ENCODE measurements at regions of chr4 and their contacts with region 1.

Region 1: DNA sequence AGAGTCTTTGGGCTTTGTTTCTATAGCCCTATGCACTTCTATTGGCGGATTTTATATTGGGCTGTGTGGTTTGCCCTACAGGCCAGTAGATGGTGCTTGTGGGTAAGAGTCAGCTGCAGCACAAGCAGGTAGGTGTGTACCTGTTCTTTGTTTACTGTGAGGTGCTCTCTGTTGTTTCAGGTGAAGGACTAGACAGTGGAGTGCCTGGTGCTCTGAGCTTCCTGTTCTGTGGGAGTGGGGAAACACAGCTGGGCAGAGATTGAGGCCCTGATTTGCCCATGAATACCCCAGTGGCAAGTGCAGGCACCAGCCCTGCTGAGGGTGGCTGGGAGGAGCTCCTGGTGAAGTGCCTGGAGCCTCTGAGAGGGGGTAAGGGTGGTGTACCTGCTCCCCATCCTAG is 26.3 kb upstream of the UCP1 start:
- DNase-seq: peak; percentile 59 to 69
- H3K4me3 ChIP-seq: no peak overlapping the region
- H3K4me3 Mint-ChIP-seq: no peak overlapping the region
- H3K27ac Mint-ChIP-seq: no peak overlapping the region
- H3K4me1 ChIP-seq: no peaks in the 10 kb centered on the region
- H3K4me1 Mint-ChIP-seq: no peaks in the 10 kb centered on the region
- H3K27me3 ChIP-seq: no peaks in the 10 kb centered on the region
- H3K27me3 Mint-ChIP-seq: peaks cover 21% of the 10 kb centered on the region
- CTCF ChIP-seq: peak; percentile 52 to 77

Region 2: DNA sequence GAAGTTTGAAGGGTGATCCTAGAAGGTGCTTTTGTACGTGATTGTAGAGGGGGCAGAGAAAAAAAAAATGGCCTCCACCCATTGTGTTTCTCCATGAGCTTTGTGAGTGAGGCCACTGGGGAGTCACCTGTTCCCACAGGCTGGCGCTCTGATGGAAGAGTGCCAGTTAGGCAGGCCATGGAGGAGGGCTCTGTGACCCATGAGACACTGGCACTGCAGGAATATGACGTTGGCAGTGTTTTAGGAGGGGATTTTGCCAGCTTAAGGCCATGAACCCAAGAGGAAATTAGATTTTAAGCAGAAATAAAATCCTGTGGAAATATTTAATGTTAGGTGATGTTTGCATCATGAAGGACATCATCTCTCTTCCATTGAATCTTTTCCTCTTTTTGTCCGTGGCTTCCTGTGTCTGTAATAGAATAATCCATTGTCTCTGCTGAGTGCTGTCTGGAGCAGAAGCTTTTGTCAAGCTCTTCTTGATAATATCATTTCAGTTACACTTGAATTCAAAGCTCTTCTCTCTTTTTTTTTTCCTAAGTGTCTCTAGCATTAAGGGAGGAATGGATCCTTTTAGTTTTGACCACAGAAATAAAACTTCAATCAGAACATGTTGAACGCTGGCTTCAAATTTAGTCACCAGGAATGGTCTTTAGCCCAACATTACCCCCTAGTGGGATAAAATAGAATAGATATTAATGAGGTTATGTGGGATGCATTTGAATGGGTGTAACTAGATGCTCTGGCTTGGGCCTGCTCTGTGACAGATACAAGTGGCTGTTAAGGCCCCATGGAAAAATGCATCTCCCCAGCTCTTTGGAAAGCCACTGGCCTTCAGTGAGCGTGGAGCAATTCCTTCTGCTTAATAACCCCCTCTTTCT is 14.7 kb after region 1 on chr4:
- CTCF ChIA-PET with region 1: interaction called, 11 read pairs
- POLR2A ChIA-PET with region 1: interaction called, 8 read pairs
- intact Hi-C with region 1: loop called (anchors 1 kb)
- DNase-seq: peak in 1 of 2 experiments; percentile 47
- H3K4me3 ChIP-seq: no peak overlapping the region
- H3K4me3 Mint-ChIP-seq: no peak overlapping the region
- H3K27ac Mint-ChIP-seq: no peak overlapping the region
- H3K4me1 ChIP-seq: peaks cover 10% of the 10 kb centered on the region
- H3K4me1 Mint-ChIP-seq: no peaks in the 10 kb centered on the region
- H3K27me3 ChIP-seq: no peaks in the 10 kb centered on the region
- H3K27me3 Mint-ChIP-seq: no peaks in the 10 kb centered on the region
- CTCF ChIP-seq: peak; percentile 39 to 40

Region 3: GRCh38 chr4:140637836-140638235 is 42.8 kb after region 1 on chr4:
- CTCF ChIA-PET with region 1: interaction called, 4 read pairs
- POLR2A ChIA-PET with region 1: no interaction called
- intact Hi-C with region 1: loop called (anchors 1 kb)
- DNase-seq: peak in 1 of 2 experiments; percentile 19
- H3K4me3 ChIP-seq: no peak overlapping the region
- H3K4me3 Mint-ChIP-seq: no peak overlapping the region
- H3K27ac Mint-ChIP-seq: peak overlapping the region; percentile 14
- H3K4me1 ChIP-seq: peaks cover 48% of the 10 kb centered on the region
- H3K4me1 Mint-ChIP-seq: peaks cover 34% of the 10 kb centered on the region
- H3K27me3 ChIP-seq: no peaks in the 10 kb centered on the region
- H3K27me3 Mint-ChIP-seq: no peaks in the 10 kb centered on the region
- CTCF ChIP-seq: peak in 1 of 2 experiments; percentile 36

Region 4: GRCh38 chr4:140743194-140743931 is 148.3 kb after region 1 on chr4:
- CTCF ChIA-PET with region 1: no interaction called
- POLR2A ChIA-PET with region 1: no interaction called
- intact Hi-C with region 1: loop called (anchors 5 kb)
- DNase-seq: peak in 1 of 2 experiments; percentile 27
- H3K4me3 ChIP-seq: no peak overlapping the region
- H3K4me3 Mint-ChIP-seq: no peak overlapping the region
- H3K27ac Mint-ChIP-seq: peak overlapping the region; percentile 67
- H3K4me1 ChIP-seq: peaks cover 44% of the 10 kb centered on the region
- H3K4me1 Mint-ChIP-seq: peaks cover 28% of the 10 kb centered on the region
- H3K27me3 ChIP-seq: no peaks in the 10 kb centered on the region
- H3K27me3 Mint-ChIP-seq: no peaks in the 10 kb centered on the region
- CTCF ChIP-seq: no peak

Region 5: DNA sequence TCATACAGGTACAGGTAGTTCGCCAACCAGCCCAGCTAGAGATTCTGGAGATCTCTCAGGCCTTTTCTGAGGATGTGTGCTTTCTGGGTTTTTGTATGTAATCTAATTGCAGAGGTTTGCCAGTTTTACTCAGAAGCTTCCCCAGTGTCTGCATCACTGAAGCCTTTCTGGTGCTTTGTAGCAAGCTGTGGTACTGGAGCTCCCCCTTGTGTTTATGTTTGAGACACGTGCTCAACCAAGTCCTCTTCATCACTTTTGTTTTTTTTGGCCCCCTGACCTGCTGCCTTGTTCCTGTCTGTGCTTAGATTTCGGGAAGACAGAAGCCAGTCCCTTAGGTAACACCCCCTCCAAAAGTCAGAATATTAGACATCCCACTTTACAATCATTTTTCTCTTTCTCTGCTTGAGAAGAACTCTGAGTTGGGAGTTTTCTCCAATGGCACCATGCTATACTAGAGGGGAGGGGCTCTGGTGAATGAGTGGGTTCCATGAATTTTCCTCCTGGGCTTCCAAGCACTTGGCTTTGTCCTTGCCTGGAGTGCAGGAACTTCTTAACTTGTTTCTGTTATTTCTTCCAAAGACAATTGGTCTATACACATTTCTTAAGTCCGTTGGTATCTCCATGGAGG is 289.5 kb after region 1 on chr4:
- CTCF ChIA-PET with region 1: no interaction called
- POLR2A ChIA-PET with region 1: no interaction called
- intact Hi-C with region 1: loop called (anchors 1 kb)
- DNase-seq: peak; percentile 66 to 73
- H3K4me3 ChIP-seq: no peak overlapping the region
- H3K4me3 Mint-ChIP-seq: no peak overlapping the region
- H3K27ac Mint-ChIP-seq: no peak overlapping the region
- H3K4me1 ChIP-seq: no peaks in the 10 kb centered on the region
- H3K4me1 Mint-ChIP-seq: no peaks in the 10 kb centered on the region
- H3K27me3 ChIP-seq: no peaks in the 10 kb centered on the region
- H3K27me3 Mint-ChIP-seq: peaks cover 4% of the 10 kb centered on the region
- CTCF ChIP-seq: peak; percentile 73 to 75

Region 6: DNA sequence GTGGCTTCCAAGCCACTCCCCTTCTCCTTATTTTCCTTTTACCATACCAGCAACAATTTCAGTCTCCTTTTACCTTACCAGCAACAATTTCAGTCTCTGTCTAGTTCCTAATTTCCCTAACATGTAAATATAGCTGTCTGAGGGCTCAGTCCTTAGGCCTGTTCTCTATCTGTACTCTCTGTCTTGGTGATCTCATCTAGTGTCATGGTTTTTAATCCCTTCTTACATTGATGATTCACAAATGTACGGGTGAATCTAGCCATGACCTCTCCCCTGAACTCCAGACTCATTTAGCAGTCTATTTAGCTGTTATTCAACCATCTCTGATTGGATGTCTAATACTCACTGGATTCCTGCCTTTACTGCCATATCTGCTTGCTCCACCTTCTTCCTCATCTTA is 1048.5 kb after region 1 on chr4:
- CTCF ChIA-PET with region 1: no interaction called
- POLR2A ChIA-PET with region 1: no interaction called
- intact Hi-C with region 1: no loop called
- DNase-seq: no peak
- H3K4me3 ChIP-seq: no peak overlapping the region
- H3K4me3 Mint-ChIP-seq: no peak overlapping the region
- H3K27ac Mint-ChIP-seq: no peak overlapping the region
- H3K4me1 ChIP-seq: no peaks in the 10 kb centered on the region
- H3K4me1 Mint-ChIP-seq: no peaks in the 10 kb centered on the region
- H3K27me3 ChIP-seq: no peaks in the 10 kb centered on the region
- H3K27me3 Mint-ChIP-seq: peaks cover 22% of the 10 kb centered on the region
- CTCF ChIP-seq: no peak

Measured in Caco-2 (cell line).